IMR-90 (cell line): ENCODE measurements at regions of chr7 and their contacts with region 1.

Region 1: GRCh38 chr7:107150375-107151073 is 18.3 kb upstream of the HBP1 start:
- DNase-seq: peak; percentile 78
- ATAC-seq: peak; percentile 58; the same call in 1 of the 2 replicates
- H3K4me3 ChIP-seq: no peak overlapping the region
- H3K27ac ChIP-seq: no peak overlapping the region
- H3K4me1 ChIP-seq: peaks cover 6% of the 10 kb centered on the region
- H3K27me3 ChIP-seq: no peaks in the 10 kb centered on the region
- CTCF ChIP-seq: peak; percentile 74
- POLR2A ChIP-seq: no peak
- RAD21 ChIP-seq: peak; percentile 75

Region 2: DNA sequence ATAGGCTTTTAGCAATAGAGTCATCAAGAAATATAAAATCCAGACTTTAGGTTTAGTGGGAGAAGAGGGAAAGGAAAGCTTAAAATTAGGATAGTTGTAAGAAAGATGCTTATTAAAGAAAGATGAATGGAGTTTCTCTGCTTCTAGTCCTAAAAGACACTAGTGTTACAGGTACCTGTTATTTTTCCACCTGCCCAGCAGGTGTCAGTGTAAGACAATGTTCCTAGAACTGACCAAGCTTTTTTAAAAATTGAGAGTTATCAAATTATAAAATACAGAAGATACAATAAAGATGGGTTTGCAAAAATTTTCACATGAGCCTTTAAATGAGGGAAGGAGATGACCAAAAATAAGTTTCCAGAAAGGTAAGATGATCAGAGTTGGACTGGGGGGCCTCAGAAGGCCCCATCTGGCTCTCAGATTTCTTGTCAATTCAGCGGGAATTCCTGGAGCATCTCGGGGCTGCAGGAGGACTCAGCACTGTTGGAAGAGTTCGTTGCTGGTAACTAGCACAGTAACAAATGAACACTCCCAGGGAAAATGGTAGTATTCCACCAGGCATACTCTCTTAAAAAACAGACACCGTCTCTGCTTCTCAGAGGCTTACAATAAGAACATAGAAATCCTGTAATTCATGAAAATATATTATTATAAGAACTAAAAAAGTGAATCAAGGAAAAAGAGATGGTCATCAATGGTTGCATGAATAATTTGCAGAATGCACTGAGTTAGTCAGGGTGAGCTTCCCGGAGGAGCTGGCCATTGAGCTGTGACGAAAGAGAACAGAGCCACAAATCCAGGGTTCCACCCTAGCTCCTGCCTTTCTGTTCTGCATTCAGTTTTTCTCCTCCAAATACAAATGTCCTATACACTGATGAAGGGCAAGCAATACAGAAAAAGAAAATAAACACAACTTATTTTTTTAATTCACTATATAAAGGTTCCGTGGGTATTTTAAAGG is 357.2 kb before region 1 on chr7:
- CTCF ChIA-PET with region 1: interaction called, 3 read pairs
- POLR2A ChIA-PET with region 1: no interaction called
- dilution Hi-C with region 1: no loop called
- in situ Hi-C with region 1: loop called (anchors 5 kb)
- intact Hi-C with region 1: loop called (anchors 1 kb)
- DNase-seq: peak; percentile 33
- ATAC-seq: peak; percentile 59
- H3K4me3 ChIP-seq: no peak overlapping the region
- H3K27ac ChIP-seq: no peak overlapping the region
- H3K4me1 ChIP-seq: peaks cover 9% of the 10 kb centered on the region; the same call in 1 of the 2 replicates
- H3K27me3 ChIP-seq: no peaks in the 10 kb centered on the region
- CTCF ChIP-seq: peak; percentile 57
- POLR2A ChIP-seq: no peak
- RAD21 ChIP-seq: peak; percentile 72

Region 3: DNA sequence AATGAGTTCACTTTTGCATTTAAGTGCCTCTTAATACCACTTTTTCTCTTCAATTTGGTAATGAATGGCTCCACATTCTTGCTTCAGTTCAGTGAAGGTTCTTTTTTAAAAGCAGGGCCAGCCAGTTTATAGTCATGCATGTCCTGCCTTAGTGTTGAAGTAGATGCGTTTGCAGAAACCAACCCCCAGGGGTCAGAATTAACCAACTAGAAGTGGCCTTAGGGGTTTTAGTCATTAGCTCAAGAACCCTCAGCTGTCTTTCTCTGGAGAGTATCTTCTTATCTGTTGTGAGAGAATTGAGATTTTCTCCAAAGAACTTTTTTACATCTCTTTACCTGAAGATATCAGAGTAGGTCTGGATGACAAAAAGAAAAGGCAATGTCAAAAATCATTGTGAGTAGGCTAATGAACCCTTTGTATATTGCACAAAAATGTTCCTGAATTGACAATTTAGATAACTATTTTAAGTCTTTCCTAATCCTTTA is 203.2 kb before region 1 on chr7:
- CTCF ChIA-PET with region 1: interaction called, 28 read pairs
- POLR2A ChIA-PET with region 1: no interaction called
- dilution Hi-C with region 1: loop called (anchors 10 kb)
- in situ Hi-C with region 1: loop called (anchors 5 kb)
- intact Hi-C with region 1: loop called (anchors 1 kb)
- DNase-seq: peak; percentile 83
- ATAC-seq: peak; percentile 100
- H3K4me3 ChIP-seq: no peak overlapping the region
- H3K27ac ChIP-seq: no peak overlapping the region
- H3K4me1 ChIP-seq: no peaks in the 10 kb centered on the region; the same call in 1 of the 2 replicates
- H3K27me3 ChIP-seq: peaks cover 8% of the 10 kb centered on the region; the same call in 1 of the 2 replicates
- CTCF ChIP-seq: peak; percentile 86
- POLR2A ChIP-seq: no peak
- RAD21 ChIP-seq: peak; percentile 83